GM12878 (cell line): ENCODE measurements at regions of chr5 and their contacts with region 1.

Region 1: GRCh38 chr5:74490811-74491210 is 149.7 kb downstream of the ENC1 start:
- DNase-seq: peak; percentile 88
- ATAC-seq: peak; percentile 98
- H3K4me3 ChIP-seq: no peak overlapping the region
- H3K27ac ChIP-seq: peak overlapping the region; percentile 85
- H3K4me1 ChIP-seq: peaks cover 26% of the 10 kb centered on the region
- H3K27me3 ChIP-seq: no peaks in the 10 kb centered on the region
- CTCF ChIP-seq: no peak
- EP300 ChIP-seq: peak in 1 of 2 experiments; percentile 73; a peak in 2 of 4 replicates
- POLR2A ChIP-seq: no peak
- RAD21 ChIP-seq: peak; percentile 38; the same call in 1 of the 2 replicates

Region 2: GRCh38 chr5:72816311-72817145 is 1674.3 kb before region 1 on chr5 and contains the start of gene TNPO1:
- CTCF ChIA-PET with region 1: no interaction called
- POLR2A ChIA-PET with region 1: no interaction called
- RAD21 ChIA-PET with region 1: no interaction called
- SMC1A ChIA-PET with region 1: no interaction called
- in situ Hi-C with region 1: no loop called
- intact Hi-C with region 1: no loop called
- DNase-seq: peak; percentile 45
- ATAC-seq: peak; percentile 93
- H3K4me3 ChIP-seq: peak within 1 kb of the TSS; percentile 64
- H3K27ac ChIP-seq: peak within 1 kb of the TSS; percentile 91
- H3K4me1 ChIP-seq: 0 out of 2 replicates have a peak, but pooled peaks cover 2% of the 10 kb centered on the region
- H3K27me3 ChIP-seq: no peaks in the 10 kb centered on the region
- CTCF ChIP-seq: no peak
- EP300 ChIP-seq: no peak
- POLR2A ChIP-seq: peak; percentile 91
- RAD21 ChIP-seq: no peak
- polyA plus RNA-seq, gene TNPO1: 18.1 to 37.3 TPM

Region 3: DNA sequence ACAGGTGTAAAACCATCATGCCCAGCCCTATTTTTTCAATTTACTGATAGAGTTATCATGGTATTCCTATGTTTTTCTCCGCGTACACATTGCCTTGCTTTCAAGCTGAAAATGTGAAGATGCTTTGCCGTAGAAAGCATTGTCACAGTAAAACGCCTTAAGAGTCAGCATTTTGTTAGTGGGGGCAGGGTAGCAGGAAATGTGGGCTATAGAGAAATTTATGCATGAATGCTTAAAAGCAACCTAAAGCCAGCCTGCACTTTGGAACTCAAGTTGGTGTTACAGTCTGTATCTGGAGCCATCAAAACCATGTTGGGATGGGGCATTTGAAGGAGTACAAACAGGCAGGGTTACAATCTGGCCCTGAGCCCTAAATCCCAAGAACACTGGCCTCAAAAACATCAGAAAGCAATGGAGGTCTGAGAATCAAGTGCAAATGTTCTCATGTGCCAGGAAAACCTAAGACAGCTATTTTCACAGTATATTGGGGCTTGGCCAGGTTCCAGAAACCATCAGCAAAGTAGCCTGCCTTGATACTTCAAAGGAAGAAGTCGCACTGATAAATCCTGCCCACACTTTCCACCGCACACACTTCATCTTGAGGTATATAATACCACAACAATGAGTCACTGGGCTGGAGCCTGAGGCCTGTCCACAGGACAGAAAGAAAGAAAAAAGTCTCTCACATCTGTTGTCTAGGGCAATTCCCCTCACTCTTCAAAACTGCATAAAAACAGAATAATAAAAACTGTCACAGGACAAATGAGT is 164.1 kb before region 1 on chr5:
- CTCF ChIA-PET with region 1: no interaction called
- POLR2A ChIA-PET with region 1: no interaction called
- RAD21 ChIA-PET with region 1: interaction called, 5 read pairs
- SMC1A ChIA-PET with region 1: no interaction called
- in situ Hi-C with region 1: no loop called
- intact Hi-C with region 1: loop called (anchors 10 kb)
- DNase-seq: peak; percentile 92
- ATAC-seq: peak; percentile 92
- H3K4me3 ChIP-seq: no peak overlapping the region
- H3K27ac ChIP-seq: no peak overlapping the region
- H3K4me1 ChIP-seq: peaks cover 13% of the 10 kb centered on the region
- H3K27me3 ChIP-seq: no peaks in the 10 kb centered on the region
- CTCF ChIP-seq: no peak
- EP300 ChIP-seq: peak; percentile 16 to 25; a peak in 2 of 4 replicates
- POLR2A ChIP-seq: no peak
- RAD21 ChIP-seq: no peak

Region 4: GRCh38 chr5:74394916-74395781 is 95.7 kb before region 1 on chr5:
- CTCF ChIA-PET with region 1: no interaction called
- POLR2A ChIA-PET with region 1: no interaction called
- RAD21 ChIA-PET with region 1: interaction called, 4 read pairs
- SMC1A ChIA-PET with region 1: no interaction called
- in situ Hi-C with region 1: no loop called
- intact Hi-C with region 1: loop called (anchors 5 kb)
- DNase-seq: no peak
- ATAC-seq: peak; percentile 33
- H3K4me3 ChIP-seq: no peak overlapping the region
- H3K27ac ChIP-seq: no peak overlapping the region
- H3K4me1 ChIP-seq: peaks cover 14% of the 10 kb centered on the region
- H3K27me3 ChIP-seq: no peaks in the 10 kb centered on the region
- CTCF ChIP-seq: peak in 2 of 3 experiments; percentile 24 to 34; a peak in 3 of 6 replicates
- EP300 ChIP-seq: no peak
- POLR2A ChIP-seq: no peak
- RAD21 ChIP-seq: peak; percentile 46

Region 5: DNA sequence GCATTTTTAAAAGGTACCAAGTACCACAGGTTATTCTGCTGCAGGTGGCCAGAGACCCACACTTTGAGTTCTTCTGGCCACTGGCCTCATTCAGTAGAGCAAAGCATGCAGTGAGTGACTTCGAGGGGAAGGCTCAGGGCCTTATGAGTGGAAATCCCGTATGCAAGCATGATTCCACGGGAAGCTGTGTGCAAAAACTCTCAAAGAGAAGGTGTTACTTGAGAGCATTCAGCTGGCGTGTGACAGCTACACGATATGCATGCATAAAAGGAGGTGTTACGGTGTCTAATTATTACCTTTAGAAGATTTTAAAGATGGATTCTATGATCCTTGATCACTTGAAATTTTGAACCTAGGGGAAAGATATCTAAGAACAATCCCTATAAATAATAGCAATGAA is 10.6 kb before region 1 on chr5:
- CTCF ChIA-PET with region 1: interaction called, 3 read pairs
- POLR2A ChIA-PET with region 1: no interaction called
- RAD21 ChIA-PET with region 1: interaction called, 5 read pairs
- SMC1A ChIA-PET with region 1: interaction called, 11 read pairs
- in situ Hi-C with region 1: no loop called
- intact Hi-C with region 1: no loop called
- DNase-seq: no peak
- ATAC-seq: no peak
- H3K4me3 ChIP-seq: no peak overlapping the region
- H3K27ac ChIP-seq: no peak overlapping the region
- H3K4me1 ChIP-seq: peaks cover 7% of the 10 kb centered on the region; the same call in 1 of the 2 replicates
- H3K27me3 ChIP-seq: no peaks in the 10 kb centered on the region
- CTCF ChIP-seq: no peak
- EP300 ChIP-seq: no peak
- POLR2A ChIP-seq: no peak
- RAD21 ChIP-seq: no peak

Region 6: GRCh38 chr5:74631081-74631953 is 140.5 kb after region 1 on chr5:
- CTCF ChIA-PET with region 1: interaction called, 12 read pairs
- POLR2A ChIA-PET with region 1: interaction called, 16 read pairs
- RAD21 ChIA-PET with region 1: interaction called, 21 read pairs
- SMC1A ChIA-PET with region 1: interaction called, 32 read pairs
- in situ Hi-C with region 1: loop called (anchors 5 kb)
- intact Hi-C with region 1: loop called (anchors 2 kb)
- DNase-seq: peak; percentile 97
- ATAC-seq: peak; percentile 88
- H3K4me3 ChIP-seq: peak overlapping the region; percentile 50; the same call in 1 of the 2 replicates
- H3K27ac ChIP-seq: peak overlapping the region; percentile 83
- H3K4me1 ChIP-seq: peaks cover 30% of the 10 kb centered on the region
- H3K27me3 ChIP-seq: no peaks in the 10 kb centered on the region
- CTCF ChIP-seq: no peak
- EP300 ChIP-seq: peak; percentile 84 to 85; a peak in 3 of 4 replicates
- POLR2A ChIP-seq: no peak
- RAD21 ChIP-seq: no peak